ENCODE measurements at regions of chr9 and their contacts with region 1.

Region 1: GRCh38 chr9:122904823-122905710 is at the start of gene RC3H2:
- DNase-seq: peak; percentile 97
- ATAC-seq: peak; percentile 93
- H3K4me3 Mint-ChIP-seq: peak within 1 kb of the TSS; percentile 92
- H3K27ac Mint-ChIP-seq: peak within 1 kb of the TSS; percentile 94
- H3K4me1 Mint-ChIP-seq: peaks cover 23% of the 10 kb centered on the region
- H3K27me3 Mint-ChIP-seq: no peaks in the 10 kb centered on the region
- total RNA-seq, gene RC3H2: 21.5 to 24.4 TPM

Region 2: GRCh38 chr9:122092611-122093506 is 812.2 kb before region 1 on chr9 and contains the start of gene TTLL11:
- CTCF ChIA-PET with region 1: no interaction called
- POLR2A ChIA-PET with region 1: no interaction called
- intact Hi-C with region 1: loop called in 1 of 2 experiments (anchors 2 kb)
- DNase-seq: peak; percentile 99
- ATAC-seq: peak; percentile 95
- H3K4me3 Mint-ChIP-seq: peak within 1 kb of the TSS; percentile 78
- H3K27ac Mint-ChIP-seq: peak within 1 kb of the TSS; percentile 8
- H3K4me1 Mint-ChIP-seq: peaks cover 29% of the 10 kb centered on the region
- H3K27me3 Mint-ChIP-seq: peaks cover 5% of the 10 kb centered on the region
- total RNA-seq, gene TTLL11: 1.3 to 1.8 TPM

Region 3: GRCh38 chr9:122510502-122510901 is 394.6 kb before region 1 on chr9 and contains the start of gene OR1J2:
- CTCF ChIA-PET with region 1: no interaction called
- POLR2A ChIA-PET with region 1: no interaction called
- intact Hi-C with region 1: no loop called
- DNase-seq: no peak
- ATAC-seq: no peak
- H3K4me3 Mint-ChIP-seq: no peak within 1 kb of the TSS
- H3K27ac Mint-ChIP-seq: no peak within 1 kb of the TSS
- H3K4me1 Mint-ChIP-seq: no peaks in the 10 kb centered on the region
- H3K27me3 Mint-ChIP-seq: peaks cover 17% of the 10 kb centered on the region
- total RNA-seq, gene OR1J2: not detected

Region 4: DNA sequence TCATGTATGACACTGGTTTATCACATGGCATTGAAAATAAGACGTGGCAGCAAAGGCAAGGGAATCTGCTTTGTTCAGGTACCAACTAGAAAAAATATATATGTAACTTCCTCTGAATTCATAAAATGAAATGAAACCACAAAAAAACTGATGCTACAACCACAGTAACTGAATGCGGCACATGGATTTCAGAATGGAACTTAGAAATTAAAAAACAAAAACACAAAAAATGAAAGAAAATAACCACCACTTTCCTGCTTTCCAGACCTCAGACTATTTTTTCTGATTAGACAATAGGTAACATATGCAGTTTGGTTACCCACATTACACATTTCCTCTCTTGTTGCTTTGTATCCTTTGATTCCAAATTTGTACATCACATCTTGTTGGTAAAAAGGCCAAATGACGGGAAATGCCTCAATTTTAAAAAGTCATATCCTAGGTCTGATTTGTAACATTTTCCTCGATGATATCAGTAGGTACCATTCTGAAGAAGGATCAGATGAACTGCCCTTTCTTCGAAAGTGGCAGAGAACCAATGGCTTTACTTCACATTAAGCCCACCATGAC is 58.6 kb before region 1 on chr9:
- CTCF ChIA-PET with region 1: no interaction called
- POLR2A ChIA-PET with region 1: no interaction called
- intact Hi-C with region 1: loop called in 1 of 2 experiments (anchors 5 kb)
- DNase-seq: no peak
- ATAC-seq: peak; percentile 48
- H3K4me3 Mint-ChIP-seq: no peak overlapping the region
- H3K27ac Mint-ChIP-seq: peak overlapping the region; percentile 92
- H3K4me1 Mint-ChIP-seq: peaks cover 34% of the 10 kb centered on the region
- H3K27me3 Mint-ChIP-seq: no peaks in the 10 kb centered on the region

Region 5: DNA sequence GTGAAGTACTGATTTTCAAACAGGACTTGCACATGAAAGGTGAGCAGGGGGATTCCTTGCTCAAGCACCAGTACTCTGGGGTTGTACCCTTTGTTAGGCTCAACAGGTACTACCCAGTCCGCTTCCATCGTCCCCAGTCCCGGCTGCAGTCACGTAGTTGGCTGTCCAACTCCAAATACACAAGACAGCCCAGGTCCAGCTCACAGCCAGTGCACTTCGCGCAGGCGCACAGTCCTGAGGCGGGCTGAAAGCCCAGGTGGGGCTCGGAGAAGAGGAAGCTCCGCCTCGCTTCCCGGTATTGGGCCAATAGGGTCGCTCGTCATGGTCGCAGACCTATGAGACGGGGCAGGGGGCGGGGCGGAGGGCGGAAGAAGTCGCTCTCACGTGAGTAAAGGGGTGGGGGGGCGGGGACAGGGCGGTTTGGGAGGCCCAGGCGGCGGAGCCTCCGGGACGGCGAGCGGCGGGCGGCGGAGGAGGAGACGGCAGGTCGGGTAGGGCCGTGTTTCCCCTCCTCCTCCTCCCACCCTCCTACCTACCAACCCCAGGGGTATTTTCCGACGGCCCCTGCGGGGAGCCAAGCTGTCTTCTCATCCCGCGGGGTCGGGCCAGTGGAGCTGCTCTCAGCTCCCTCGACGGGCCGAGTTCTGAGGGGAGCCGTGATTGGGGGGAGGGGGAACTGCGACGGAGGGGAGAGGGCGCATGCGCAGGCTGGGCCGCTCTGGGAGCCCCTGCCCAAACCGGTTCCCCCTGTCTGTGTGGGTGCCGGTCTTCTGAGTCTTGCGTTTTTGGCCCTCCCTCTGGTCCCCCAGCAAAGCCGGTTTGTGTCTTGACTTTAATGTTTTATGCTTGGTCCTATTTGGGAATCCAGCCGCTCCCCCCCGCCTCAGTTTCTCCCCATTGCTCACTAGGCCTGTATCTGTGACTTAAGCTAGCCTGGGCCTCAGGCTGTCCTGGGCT is 35.8 kb after region 1 on chr9 and contains the start of gene RABGAP1:
- CTCF ChIA-PET with region 1: interaction called, 7 read pairs
- POLR2A ChIA-PET with region 1: interaction called, 11 read pairs
- intact Hi-C with region 1: loop called (anchors 1 kb)
- DNase-seq: peak; percentile 99
- ATAC-seq: peak; percentile 99
- H3K4me3 Mint-ChIP-seq: peak within 1 kb of the TSS; percentile 99
- H3K27ac Mint-ChIP-seq: peak within 1 kb of the TSS; percentile 95
- H3K4me1 Mint-ChIP-seq: peaks cover 33% of the 10 kb centered on the region
- H3K27me3 Mint-ChIP-seq: no peaks in the 10 kb centered on the region
- total RNA-seq, gene RABGAP1: 24.3 to 27.2 TPM

Region 6: GRCh38 chr9:123119566-123119965 is 214.5 kb after region 1 on chr9:
- CTCF ChIA-PET with region 1: no interaction called
- POLR2A ChIA-PET with region 1: no interaction called
- intact Hi-C with region 1: no loop called
- DNase-seq: no peak
- ATAC-seq: no peak
- H3K4me3 Mint-ChIP-seq: no peak overlapping the region
- H3K27ac Mint-ChIP-seq: no peak overlapping the region
- H3K4me1 Mint-ChIP-seq: peaks cover 6% of the 10 kb centered on the region
- H3K27me3 Mint-ChIP-seq: no peaks in the 10 kb centered on the region

Region 7: GRCh38 chr9:123268240-123268949 is 363.3 kb after region 1 on chr9 and contains the start of gene STRBP:
- CTCF ChIA-PET with region 1: no interaction called
- POLR2A ChIA-PET with region 1: no interaction called
- intact Hi-C with region 1: loop called in 1 of 2 experiments (anchors 1 kb)
- DNase-seq: peak; percentile 96
- ATAC-seq: peak; percentile 93
- H3K4me3 Mint-ChIP-seq: peak within 1 kb of the TSS; percentile 73
- H3K27ac Mint-ChIP-seq: peak within 1 kb of the TSS; percentile 26
- H3K4me1 Mint-ChIP-seq: peaks cover 32% of the 10 kb centered on the region
- H3K27me3 Mint-ChIP-seq: no peaks in the 10 kb centered on the region
- total RNA-seq, gene STRBP: 31.6 to 34.8 TPM